K562 (cell line): ENCODE measurements at regions of chr12 and their contacts with region 1.

Region 1: DNA sequence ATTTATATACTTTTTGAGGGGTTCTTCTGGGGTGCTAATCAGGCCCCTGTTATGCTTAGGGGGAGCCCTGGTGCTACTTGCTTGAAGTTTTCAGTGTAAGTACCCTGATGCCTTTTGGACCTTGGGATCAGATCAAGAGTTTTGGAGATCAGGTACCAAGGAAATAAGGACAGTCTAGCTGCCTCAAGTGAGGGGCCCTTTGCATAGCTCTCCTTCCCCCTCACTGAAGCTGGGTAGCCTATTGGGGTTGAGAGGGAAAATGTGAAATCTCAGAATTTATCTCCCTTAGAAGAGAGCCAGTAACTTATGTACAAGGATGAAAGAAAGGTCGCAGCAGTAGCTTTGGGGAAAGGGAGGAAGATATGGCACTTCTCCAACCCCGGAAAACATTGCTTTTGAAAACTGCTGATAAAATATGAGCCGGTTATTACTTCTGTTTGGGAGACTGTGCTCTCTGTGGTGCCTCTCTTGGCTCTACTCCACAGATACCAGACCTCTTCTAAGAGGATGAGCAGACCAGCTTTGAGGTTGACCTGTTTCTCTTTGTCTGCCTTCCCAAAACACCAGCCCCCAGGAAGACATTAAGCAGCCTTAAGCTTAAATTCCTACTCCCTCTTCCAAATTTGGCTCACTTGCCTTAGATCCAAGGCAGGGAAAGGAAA is 8.8 kb upstream of the AMHR2 start:
- DNase-seq: peak in 3 of 4 experiments; percentile 5 to 48 (median 15)
- ATAC-seq: peak; percentile 74
- H3K4me3 ChIP-seq: no peak overlapping the region
- H3K27ac ChIP-seq: no peak overlapping the region
- H3K4me1 ChIP-seq: peaks cover 3 to 15% of the 10 kb centered on the region in 2 experiments; a peak in 4 of 5 replicates
- H3K27me3 ChIP-seq: no peaks in the 10 kb centered on the region
- CTCF ChIP-seq: no peak
- EP300 ChIP-seq: no peak
- POLR2A ChIP-seq: no peak
- RAD21 ChIP-seq: no peak

Region 2: DNA sequence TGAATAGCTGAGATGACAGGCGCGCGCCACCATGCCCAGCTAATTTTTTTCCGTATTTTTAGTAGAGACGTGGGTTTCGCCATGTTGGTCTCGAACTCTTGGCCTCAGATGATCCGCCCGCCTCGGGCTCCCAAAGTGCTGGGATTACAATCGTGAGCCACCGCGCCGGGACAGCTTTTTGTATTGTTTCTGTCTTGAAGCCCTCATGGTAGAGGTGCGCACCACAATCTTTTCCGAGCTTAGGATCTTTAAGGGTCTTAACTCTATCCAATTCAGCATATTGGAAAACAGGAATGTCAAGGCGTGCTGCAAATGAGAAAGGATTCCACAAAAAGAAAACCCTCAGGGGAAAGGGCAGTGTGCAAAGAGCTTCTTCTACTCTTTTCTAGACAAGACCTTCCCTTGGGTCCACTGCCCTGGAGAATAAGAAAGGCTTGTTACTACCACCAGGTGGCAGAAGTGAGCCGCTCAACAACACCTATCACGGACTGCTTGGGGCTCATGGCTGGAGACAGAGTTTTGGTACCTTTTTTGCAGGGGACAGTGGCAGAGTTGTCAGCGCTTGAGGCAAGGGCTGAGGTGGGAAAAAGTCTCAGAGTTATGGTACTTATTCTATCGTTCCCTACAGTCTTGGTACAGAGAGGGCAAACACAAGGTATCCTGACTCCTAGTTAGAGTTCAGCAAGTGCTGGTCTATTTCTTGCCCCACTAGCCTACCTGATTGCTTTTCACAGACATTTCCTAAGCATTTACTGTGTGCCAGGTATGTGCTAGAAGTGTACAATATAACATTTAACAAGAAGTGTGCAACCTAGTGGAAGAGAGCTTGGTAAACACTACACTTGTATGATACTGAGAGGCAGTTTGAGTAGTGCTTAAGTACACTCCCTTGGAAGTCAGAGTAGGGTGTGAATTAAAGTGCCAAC is 62.3 kb before region 1 on chr12:
- CTCF ChIA-PET with region 1: interaction called, 43 read pairs
- POLR2A ChIA-PET with region 1: interaction called, 3 read pairs
- in situ Hi-C with region 1: loop called (anchors 5 kb)
- intact Hi-C with region 1: no loop called
- DNase-seq: peak; percentile 71 to 93 (median 74)
- ATAC-seq: peak; percentile 95
- H3K4me3 ChIP-seq: no peak overlapping the region
- H3K27ac ChIP-seq: no peak overlapping the region
- H3K4me1 ChIP-seq: peaks cover 12 to 17% of the 10 kb centered on the region in 2 experiments
- H3K27me3 ChIP-seq: no peaks in the 10 kb centered on the region
- CTCF ChIP-seq: peak; percentile 91 to 96 (median 92)
- EP300 ChIP-seq: no peak
- POLR2A ChIP-seq: no peak
- RAD21 ChIP-seq: peak; percentile 98 to 99

Region 3: DNA sequence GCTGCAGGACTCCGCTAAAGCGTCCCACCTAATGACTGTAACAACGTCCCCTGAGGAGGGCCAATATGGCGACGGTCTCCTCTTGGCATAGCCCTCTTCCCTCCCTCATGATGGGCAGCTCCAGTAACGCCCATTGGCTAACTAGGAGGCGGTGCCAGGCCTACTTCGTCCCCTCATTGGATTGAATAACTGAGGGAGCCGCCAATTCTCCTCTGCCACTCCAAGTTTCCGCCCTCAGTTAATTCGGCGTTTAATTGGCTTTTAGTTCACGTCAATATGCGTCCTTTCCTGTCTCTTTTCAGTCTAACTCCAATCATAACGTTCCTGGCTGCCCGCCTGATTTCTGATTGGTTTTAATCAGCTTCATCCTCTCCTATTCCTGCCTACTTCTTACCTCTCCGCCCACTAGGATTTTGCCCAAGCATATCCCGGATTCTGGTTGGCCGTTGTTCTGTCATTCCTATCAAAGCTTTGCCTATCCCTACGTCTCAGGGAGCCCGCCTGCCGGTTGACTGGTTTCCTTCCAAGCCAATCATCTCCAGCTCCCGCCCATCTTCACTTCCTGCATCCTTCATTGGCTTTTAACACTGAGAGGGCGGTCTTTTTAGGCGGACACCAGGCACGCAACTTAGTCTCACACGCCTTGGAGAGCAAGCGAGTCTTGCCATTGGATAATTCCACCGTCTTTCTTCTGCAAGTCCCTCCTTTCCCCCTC is 35.3 kb before region 1 on chr12:
- CTCF ChIA-PET with region 1: no interaction called
- POLR2A ChIA-PET with region 1: interaction called, 7 read pairs
- in situ Hi-C with region 1: no loop called
- intact Hi-C with region 1: loop called (anchors 2 kb)
- DNase-seq: peak; percentile 85 to 100 (median 92)
- ATAC-seq: peak; percentile 86
- H3K4me3 ChIP-seq: peak overlapping the region; percentile 62
- H3K27ac ChIP-seq: peak overlapping the region; percentile 94
- H3K4me1 ChIP-seq: peaks cover 30 to 38% of the 10 kb centered on the region in 2 experiments
- H3K27me3 ChIP-seq: no peaks in the 10 kb centered on the region
- CTCF ChIP-seq: peak in 1 of 3 experiments; percentile 7; a peak in 1 of 6 replicates
- EP300 ChIP-seq: peak; percentile 18; the same call in 1 of the 2 replicates
- POLR2A ChIP-seq: peak; percentile 95
- RAD21 ChIP-seq: no peak

Region 4: GRCh38 chr12:53391729-53392128 is 23.2 kb before region 1 on chr12:
- CTCF ChIA-PET with region 1: interaction called, 3 read pairs
- POLR2A ChIA-PET with region 1: interaction called, 10 read pairs
- in situ Hi-C with region 1: no loop called
- intact Hi-C with region 1: no loop called
- DNase-seq: no peak
- ATAC-seq: no peak
- H3K4me3 ChIP-seq: no peak overlapping the region
- H3K27ac ChIP-seq: no peak overlapping the region
- H3K4me1 ChIP-seq: peaks cover 7 to 9% of the 10 kb centered on the region in 2 experiments
- H3K27me3 ChIP-seq: no peaks in the 10 kb centered on the region
- CTCF ChIP-seq: no peak
- EP300 ChIP-seq: no peak
- POLR2A ChIP-seq: no peak
- RAD21 ChIP-seq: no peak

Region 5: DNA sequence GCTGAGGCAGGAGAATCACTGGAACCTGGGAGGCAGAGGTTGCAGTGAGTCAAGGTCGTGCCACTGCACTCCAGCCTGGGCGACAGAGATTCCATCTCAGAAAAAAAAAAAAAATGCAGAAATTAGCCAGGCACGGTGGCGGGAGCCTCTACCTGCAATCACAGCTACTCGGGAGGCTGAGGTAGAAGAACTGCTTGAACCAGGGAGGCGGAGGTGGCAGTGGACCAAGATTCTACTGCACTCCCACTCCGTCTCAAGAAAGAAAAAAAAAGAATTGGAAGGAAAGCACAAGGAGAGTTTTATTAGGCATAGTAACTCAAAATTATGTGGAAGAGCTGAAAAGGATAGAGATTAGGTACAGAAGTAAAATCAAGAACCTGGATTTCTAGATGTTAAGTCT is 12.0 kb before region 1 on chr12:
- CTCF ChIA-PET with region 1: no interaction called
- POLR2A ChIA-PET with region 1: no interaction called
- in situ Hi-C with region 1: no loop called
- intact Hi-C with region 1: no loop called
- DNase-seq: no peak
- ATAC-seq: no peak
- H3K4me3 ChIP-seq: no peak overlapping the region
- H3K27ac ChIP-seq: no peak overlapping the region
- H3K4me1 ChIP-seq: peaks cover under 1 to 21% of the 10 kb centered on the region in 2 experiments; a peak in 3 of 5 replicates
- H3K27me3 ChIP-seq: no peaks in the 10 kb centered on the region
- CTCF ChIP-seq: no peak
- EP300 ChIP-seq: no peak
- POLR2A ChIP-seq: no peak
- RAD21 ChIP-seq: no peak

Region 6: DNA sequence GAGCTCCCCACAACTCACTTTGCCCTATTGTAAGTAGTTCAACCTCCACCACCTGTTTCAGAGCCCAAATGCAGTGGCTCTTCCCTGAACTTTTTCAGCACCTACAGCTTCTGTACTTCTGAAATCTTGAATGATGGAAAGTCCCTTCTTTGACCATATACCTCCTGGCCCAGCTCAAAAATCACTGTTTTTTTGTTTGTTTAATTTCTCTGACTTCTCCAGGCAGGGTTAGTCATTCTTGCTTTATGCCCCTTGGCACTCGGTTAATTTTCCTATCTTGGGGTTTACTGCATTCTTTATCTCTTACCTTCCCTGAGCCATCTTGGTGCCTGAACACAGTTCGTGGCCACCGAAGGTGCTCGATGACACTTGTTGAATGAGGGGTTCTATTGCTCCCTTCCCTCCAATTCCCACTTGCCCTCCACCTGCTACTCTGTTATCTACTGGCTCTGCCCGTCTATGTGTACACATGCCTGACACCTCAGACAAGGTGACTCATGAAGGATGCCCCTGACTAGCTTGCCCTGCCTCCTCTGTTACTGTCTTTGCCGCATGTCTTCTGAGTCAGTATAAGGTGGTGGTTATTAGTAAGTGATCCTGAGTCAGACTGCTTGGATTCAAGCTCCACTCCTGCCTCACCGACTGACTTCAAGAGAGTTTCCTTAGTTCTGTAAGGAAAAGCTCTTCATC is 13.2 kb after region 1 on chr12:
- CTCF ChIA-PET with region 1: no interaction called
- POLR2A ChIA-PET with region 1: interaction called, 13 read pairs
- in situ Hi-C with region 1: no loop called
- intact Hi-C with region 1: no loop called
- DNase-seq: peak in 2 of 4 experiments; percentile 15 to 38
- ATAC-seq: no peak
- H3K4me3 ChIP-seq: no peak overlapping the region
- H3K27ac ChIP-seq: no peak overlapping the region
- H3K4me1 ChIP-seq: peaks cover 30 to 31% of the 10 kb centered on the region in 2 experiments
- H3K27me3 ChIP-seq: no peaks in the 10 kb centered on the region
- CTCF ChIP-seq: no peak
- EP300 ChIP-seq: no peak
- POLR2A ChIP-seq: no peak
- RAD21 ChIP-seq: no peak

Region 7: GRCh38 chr12:53625946-53626701 is 211.2 kb after region 1 on chr12 and contains the start of gene ATF7:
- CTCF ChIA-PET with region 1: no interaction called
- POLR2A ChIA-PET with region 1: no interaction called
- in situ Hi-C with region 1: no loop called
- intact Hi-C with region 1: no loop called
- DNase-seq: peak; percentile 97 to 99 (median 98)
- ATAC-seq: peak; percentile 95
- H3K4me3 ChIP-seq: peak within 1 kb of the TSS; percentile 60
- H3K27ac ChIP-seq: peak within 1 kb of the TSS; percentile 98
- H3K4me1 ChIP-seq: peaks cover 8 to 10% of the 10 kb centered on the region in 2 experiments; a peak in 3 of 5 replicates
- H3K27me3 ChIP-seq: no peaks in the 10 kb centered on the region
- CTCF ChIP-seq: no peak
- EP300 ChIP-seq: no peak; the same call in 1 of the 2 replicates
- POLR2A ChIP-seq: peak; percentile 89
- RAD21 ChIP-seq: no peak
- polyA plus RNA-seq, gene ATF7: 28.9 to 30.4 TPM